ENCODE measurements at regions of chr7 and their contacts with region 1.

Region 1: GRCh38 chr7:44885394-44886317 is at the start of gene PURB:
- DNase-seq: peak; percentile 98
- ATAC-seq: peak; percentile 97
- H3K4me3 Mint-ChIP-seq: peak within 1 kb of the TSS; percentile 86
- H3K27ac Mint-ChIP-seq: peak within 1 kb of the TSS; percentile 98
- H3K4me1 Mint-ChIP-seq: peaks cover 51% of the 10 kb centered on the region
- H3K27me3 Mint-ChIP-seq: no peaks in the 10 kb centered on the region
- total RNA-seq, gene PURB: 18.8 to 20.8 TPM

Region 2: DNA sequence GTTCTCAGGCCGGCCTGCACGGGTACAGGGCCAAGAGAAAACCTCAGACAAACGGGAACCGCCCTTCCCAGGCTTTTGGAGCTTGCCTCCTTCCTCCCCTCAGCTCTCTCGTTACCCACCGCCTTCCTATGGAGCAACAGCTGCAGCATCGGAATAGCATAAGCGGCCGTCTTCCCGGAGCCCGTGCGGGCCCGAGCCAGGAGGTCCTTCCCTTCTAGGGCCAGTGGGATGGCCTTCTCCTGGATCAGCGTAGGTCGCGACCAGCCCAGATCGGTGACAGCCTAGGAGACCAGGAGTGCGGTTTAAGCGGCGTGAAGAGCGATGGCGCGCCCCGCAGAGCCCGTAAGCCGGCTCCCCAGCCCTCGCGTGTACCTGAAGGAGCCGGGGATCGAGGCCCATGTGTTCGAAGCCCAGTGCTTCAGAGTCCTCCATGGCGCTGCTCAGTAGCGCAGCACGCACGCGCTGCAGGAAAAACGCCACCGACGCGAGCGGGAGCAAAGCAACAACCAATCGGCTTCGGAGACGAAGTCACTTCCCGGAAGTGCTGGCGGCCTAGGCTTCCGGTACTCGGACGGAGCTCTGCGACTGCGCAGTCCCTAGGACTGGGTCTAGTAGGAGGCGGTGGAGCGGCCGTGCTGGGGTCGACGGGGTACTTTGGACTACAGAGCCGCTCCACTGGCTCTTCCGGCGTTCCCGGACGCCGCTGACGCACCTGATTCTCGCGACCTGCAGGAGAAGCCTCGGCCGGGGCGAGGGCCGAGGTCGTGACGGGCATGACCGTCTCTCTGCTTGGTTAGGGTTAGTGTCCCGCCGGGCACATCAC is 312.0 kb before region 1 on chr7 and contains the start of gene DDX56:
- CTCF ChIA-PET with region 1: no interaction called
- POLR2A ChIA-PET with region 1: no interaction called
- intact Hi-C with region 1: loop called in 1 of 2 experiments (anchors 1 kb)
- DNase-seq: peak; percentile 97
- ATAC-seq: peak; percentile 98
- H3K4me3 Mint-ChIP-seq: peak within 1 kb of the TSS; percentile 90
- H3K27ac Mint-ChIP-seq: peak within 1 kb of the TSS; percentile 94
- H3K4me1 Mint-ChIP-seq: peaks cover 41% of the 10 kb centered on the region
- H3K27me3 Mint-ChIP-seq: no peaks in the 10 kb centered on the region
- total RNA-seq, gene DDX56: 98.5 to 104 TPM

Region 3: GRCh38 chr7:44606450-44607254 is 279.0 kb before region 1 on chr7 and contains the start of gene OGDH:
- CTCF ChIA-PET with region 1: interaction called, 3 read pairs
- POLR2A ChIA-PET with region 1: interaction called, 6 read pairs
- intact Hi-C with region 1: loop called (anchors 1 kb)
- DNase-seq: peak; percentile 100
- ATAC-seq: peak; percentile 98
- H3K4me3 Mint-ChIP-seq: peak within 1 kb of the TSS; percentile 92
- H3K27ac Mint-ChIP-seq: peak within 1 kb of the TSS; percentile 97
- H3K4me1 Mint-ChIP-seq: peaks cover 33% of the 10 kb centered on the region
- H3K27me3 Mint-ChIP-seq: no peaks in the 10 kb centered on the region
- total RNA-seq, gene OGDH: 80.3 to 90.1 TPM

Region 4: DNA sequence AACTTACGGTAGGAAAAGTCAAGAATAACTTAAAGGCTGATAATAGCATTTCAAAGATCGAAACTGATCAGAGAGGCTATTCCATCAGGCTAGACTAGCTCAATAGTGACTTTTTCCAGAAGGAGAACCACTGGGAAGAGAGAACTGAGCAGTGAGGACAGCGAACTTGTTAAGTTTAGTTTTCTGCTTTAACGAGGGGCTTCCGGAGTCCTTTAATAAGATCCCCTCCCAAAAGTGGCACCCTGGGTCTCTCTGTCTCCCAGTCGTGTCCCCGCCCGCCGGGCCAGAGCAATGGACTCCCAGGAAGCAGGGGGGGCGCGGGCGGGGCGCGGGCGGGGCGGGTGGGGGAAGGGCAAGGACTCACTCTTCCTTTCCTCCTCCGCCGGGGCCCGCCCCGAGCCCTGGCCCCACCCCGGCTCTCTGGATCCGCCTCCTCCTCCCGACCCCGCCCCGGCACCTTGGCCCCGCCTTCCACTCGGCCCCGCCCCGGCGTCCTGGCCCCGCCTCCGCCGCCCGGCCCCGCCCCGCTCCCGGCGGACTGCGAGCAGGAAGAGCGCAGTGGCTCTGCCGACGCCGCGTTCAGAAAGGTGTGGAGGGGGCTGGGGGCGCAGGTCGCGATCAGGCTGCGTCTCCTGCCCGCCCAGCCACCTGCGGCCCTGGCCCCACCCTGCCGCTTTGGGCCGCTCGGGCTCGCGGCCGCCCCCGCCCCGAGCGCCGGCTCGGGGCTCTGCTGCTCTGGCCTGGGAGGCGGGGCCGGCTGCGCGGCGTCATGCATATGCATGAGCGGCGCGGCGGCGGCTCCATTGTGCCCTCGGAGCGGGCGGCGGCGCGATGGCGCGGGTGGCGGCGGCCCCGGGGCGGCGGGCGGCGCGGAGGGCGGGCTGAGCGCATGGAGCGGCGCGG is 137.4 kb before region 1 on chr7 and contains the start of gene ZMIZ2:
- CTCF ChIA-PET with region 1: no interaction called
- POLR2A ChIA-PET with region 1: no interaction called
- intact Hi-C with region 1: loop called (anchors 1 to 5 kb)
- DNase-seq: peak; percentile 97
- ATAC-seq: peak; percentile 87
- H3K4me3 Mint-ChIP-seq: peak within 1 kb of the TSS; percentile 78
- H3K27ac Mint-ChIP-seq: peak within 1 kb of the TSS; percentile 97
- H3K4me1 Mint-ChIP-seq: peaks cover 31% of the 10 kb centered on the region
- H3K27me3 Mint-ChIP-seq: no peaks in the 10 kb centered on the region
- total RNA-seq, gene ZMIZ2: 82.8 to 106 TPM

Region 5: GRCh38 chr7:44914992-44915607 is 29.4 kb after region 1 on chr7:
- CTCF ChIA-PET with region 1: interaction called, 20 read pairs
- POLR2A ChIA-PET with region 1: interaction called, 8 read pairs
- intact Hi-C with region 1: loop called (anchors 1 kb)
- DNase-seq: peak; percentile 87
- ATAC-seq: peak; percentile 99
- H3K4me3 Mint-ChIP-seq: peak overlapping the region; percentile 3
- H3K27ac Mint-ChIP-seq: peak overlapping the region; percentile 73
- H3K4me1 Mint-ChIP-seq: peaks cover 23% of the 10 kb centered on the region
- H3K27me3 Mint-ChIP-seq: no peaks in the 10 kb centered on the region

Region 6: GRCh38 chr7:44980393-44981034 is 94.9 kb after region 1 on chr7:
- CTCF ChIA-PET with region 1: no interaction called
- POLR2A ChIA-PET with region 1: interaction called, 6 read pairs
- intact Hi-C with region 1: loop called in 1 of 2 experiments (anchors 1 kb)
- DNase-seq: peak; percentile 94
- ATAC-seq: peak; percentile 48
- H3K4me3 Mint-ChIP-seq: peak overlapping the region; percentile 99
- H3K27ac Mint-ChIP-seq: peak overlapping the region; percentile 99
- H3K4me1 Mint-ChIP-seq: peaks cover 68% of the 10 kb centered on the region
- H3K27me3 Mint-ChIP-seq: no peaks in the 10 kb centered on the region

Region 7: GRCh38 chr7:45111298-45112223 is 225.9 kb after region 1 on chr7 and contains the start of gene TBRG4:
- CTCF ChIA-PET with region 1: no interaction called
- POLR2A ChIA-PET with region 1: interaction called, 6 read pairs
- intact Hi-C with region 1: loop called in 1 of 2 experiments (anchors 1 kb)
- DNase-seq: peak; percentile 97
- ATAC-seq: peak; percentile 95
- H3K4me3 Mint-ChIP-seq: peak within 1 kb of the TSS; percentile 94
- H3K27ac Mint-ChIP-seq: peak within 1 kb of the TSS; percentile 96
- H3K4me1 Mint-ChIP-seq: peaks cover 35% of the 10 kb centered on the region
- H3K27me3 Mint-ChIP-seq: peaks cover 2% of the 10 kb centered on the region
- total RNA-seq, gene TBRG4: 158 to 163 TPM

Measured in activated CD4-positive, alpha-beta T cell treated with anti-CD3 and anti-CD28 coated beads for 36 hours (primary cell).